OCI-LY7 (cell line): ENCODE measurements at regions of chr10 and their contacts with region 1.

Region 1: DNA sequence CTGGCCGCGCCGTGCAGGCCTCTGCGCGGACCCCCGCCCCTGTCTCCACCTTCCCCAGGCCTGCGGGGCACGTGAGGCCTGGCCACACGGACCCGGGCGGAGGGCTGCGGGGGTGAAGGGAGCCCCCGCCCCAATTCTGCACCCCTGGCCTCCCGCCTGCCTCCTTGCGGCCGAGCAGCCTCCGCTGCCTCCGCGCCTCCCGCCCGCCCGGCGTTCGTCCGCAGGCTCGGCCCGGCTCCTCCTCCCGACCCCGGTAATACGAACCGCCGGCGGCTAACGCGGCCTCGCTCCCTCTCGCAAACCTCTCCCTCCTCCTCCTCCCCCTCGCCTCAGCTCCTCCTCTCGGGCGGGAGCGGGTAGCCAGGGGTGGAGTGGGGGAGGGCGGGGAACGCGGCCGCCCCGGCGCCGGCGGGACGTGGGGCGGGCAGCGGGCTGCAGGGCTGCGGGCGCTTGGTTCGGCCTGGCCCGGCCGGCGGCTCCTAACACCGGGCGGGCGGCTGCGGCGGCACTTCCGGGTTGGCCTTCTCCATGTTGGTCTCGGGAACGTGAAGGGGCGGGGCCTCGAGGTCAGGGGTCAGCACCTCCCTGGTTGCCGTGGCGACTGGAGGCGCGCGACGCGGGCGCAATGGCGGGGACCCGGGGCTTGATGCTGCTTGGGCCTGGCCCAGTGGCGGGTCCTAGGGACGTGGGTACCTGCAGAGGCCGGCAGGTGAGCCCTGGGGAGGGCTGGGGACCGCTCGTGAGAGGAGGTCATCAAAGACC is at the start of gene RAB11FIP2:
- DNase-seq: peak; percentile 93
- H3K4me3 ChIP-seq: peak within 1 kb of the TSS; percentile 75
- H3K27ac ChIP-seq: peak within 1 kb of the TSS; percentile 58
- H3K4me1 ChIP-seq: peaks cover 33% of the 10 kb centered on the region
- CTCF ChIP-seq: peak; percentile 43
- total RNA-seq, gene RAB11FIP2: 13.6 and 20.9 TPM in 2 replicates

Region 2: GRCh38 chr10:117375360-117376178 is 671.0 kb before region 1 on chr10 and contains the start of gene PDZD8:
- CTCF ChIA-PET with region 1: no interaction called
- POLR2A ChIA-PET with region 1: no interaction called
- intact Hi-C with region 1: loop called (anchors 5 kb)
- DNase-seq: peak; percentile 92
- H3K4me3 ChIP-seq: peak within 1 kb of the TSS; percentile 97
- H3K27ac ChIP-seq: peak within 1 kb of the TSS; percentile 34
- H3K4me1 ChIP-seq: peaks cover 21% of the 10 kb centered on the region
- CTCF ChIP-seq: no peak
- total RNA-seq, gene PDZD8: 8.6 and 10.5 TPM in 2 replicates

Region 3: DNA sequence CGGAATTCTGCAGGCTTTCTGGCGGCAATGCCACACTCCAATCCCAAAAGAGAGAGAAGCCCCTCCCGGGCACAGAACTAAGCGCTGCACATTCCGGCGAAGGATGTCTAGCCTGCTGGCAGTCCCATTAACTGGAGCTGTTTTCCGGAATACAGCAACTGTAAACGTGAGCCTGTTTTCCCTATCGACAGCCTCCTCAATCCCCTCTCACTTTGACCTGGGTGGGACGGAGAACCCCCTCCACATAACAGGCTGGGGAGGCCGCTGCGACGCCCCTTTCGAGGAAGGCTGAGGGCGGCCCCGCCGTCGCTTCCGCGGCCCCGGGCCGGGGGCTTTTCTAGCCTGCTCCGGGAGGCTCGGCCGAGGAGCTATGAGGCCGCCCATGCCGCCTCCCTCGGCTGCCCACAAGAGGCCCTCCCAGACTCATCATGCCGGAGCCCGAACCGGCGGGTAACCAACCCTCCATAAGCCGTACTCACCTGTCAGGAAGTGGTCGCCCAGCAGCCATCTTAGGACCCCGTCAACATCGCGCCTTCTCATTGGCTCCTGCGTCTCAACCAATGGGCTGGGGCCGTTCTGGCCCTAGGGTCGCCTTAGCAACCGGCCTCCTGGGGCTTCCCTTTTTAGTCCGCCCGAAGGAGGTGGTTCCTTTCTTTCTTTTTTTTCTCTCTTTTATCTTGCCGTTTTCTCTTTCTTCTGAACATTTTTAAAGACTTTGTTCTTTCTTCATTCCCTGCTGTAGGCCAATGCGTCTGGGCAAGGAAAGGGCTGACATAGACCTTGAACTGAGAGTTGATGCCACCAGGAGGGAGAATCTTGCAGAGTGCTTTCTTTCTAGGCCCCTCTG is 295.4 kb after region 1 on chr10 and contains the start of gene FAM204A:
- CTCF ChIA-PET with region 1: no interaction called
- POLR2A ChIA-PET with region 1: no interaction called
- intact Hi-C with region 1: loop called (anchors 10 kb)
- DNase-seq: peak; percentile 95
- H3K4me3 ChIP-seq: peak within 1 kb of the TSS; percentile 88
- H3K27ac ChIP-seq: peak within 1 kb of the TSS; percentile 38
- H3K4me1 ChIP-seq: peaks cover 22% of the 10 kb centered on the region
- CTCF ChIP-seq: no peak
- total RNA-seq, gene FAM204A: 32.2 and 32.4 TPM in 2 replicates